B cell (primary cell): ENCODE measurements at regions of chr21 and their contacts with region 1.

Region 1: GRCh38 chr21:43810505-43811261 is 21.3 kb downstream of the RRP1 start:
- DNase-seq: peak; percentile 84
- ATAC-seq: peak; percentile 97
- H3K4me3 ChIP-seq: no peak overlapping the region
- H3K4me3 Mint-ChIP-seq: no peak overlapping the region
- H3K27ac ChIP-seq: no peak overlapping the region
- H3K27ac Mint-ChIP-seq: peak overlapping the region; percentile 56
- H3K4me1 ChIP-seq: peaks cover 21 to 33% of the 10 kb centered on the region in 2 donors
- H3K4me1 Mint-ChIP-seq: peaks cover 28% of the 10 kb centered on the region
- H3K27me3 ChIP-seq: peaks cover 0 to 25% (median 5%) of the 10 kb centered on the region in 4 experiments
- H3K27me3 Mint-ChIP-seq: peaks cover 7% of the 10 kb centered on the region
- CTCF ChIP-seq: peak; percentile 83

Region 2: DNA sequence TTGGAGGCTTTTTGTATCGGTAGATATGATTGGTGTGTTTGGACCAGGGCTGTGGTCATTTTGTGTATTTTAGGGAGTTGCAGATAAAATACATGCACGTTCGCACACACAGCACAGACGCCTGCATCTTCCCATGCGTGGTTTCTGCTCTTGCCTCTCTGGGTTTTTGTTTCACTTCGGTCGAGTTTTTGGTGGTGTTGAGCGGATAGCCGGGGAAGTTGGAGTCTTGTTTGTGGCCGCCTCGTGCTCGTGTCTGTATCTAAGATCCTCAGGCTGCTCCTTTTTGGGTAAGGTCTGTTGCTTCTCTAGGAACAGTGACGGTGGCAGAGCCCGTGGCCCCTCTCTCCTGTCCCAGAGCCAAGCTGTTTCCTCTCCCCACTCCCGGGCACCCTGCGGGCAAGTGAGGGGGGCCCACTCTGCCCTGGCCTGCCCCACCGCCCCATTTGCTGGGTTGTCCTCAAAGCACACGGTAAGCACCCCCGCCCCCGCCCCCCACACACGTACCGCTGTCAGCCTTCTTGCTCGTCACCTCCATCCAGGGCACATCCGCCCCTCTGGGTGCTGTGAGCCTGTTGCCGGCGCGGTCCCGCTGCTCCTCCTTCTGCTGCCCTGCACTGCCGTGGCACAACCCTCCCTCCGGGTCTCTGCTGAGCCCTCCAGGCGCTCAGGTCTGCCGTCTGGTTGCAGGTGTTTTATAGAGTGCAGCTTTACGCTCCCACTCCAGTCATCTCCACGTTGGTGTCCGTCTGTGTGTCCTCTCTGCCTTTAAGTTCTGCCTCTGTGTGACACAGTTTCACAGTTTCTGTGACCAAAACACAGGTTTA is 106.2 kb after region 1 on chr21:
- CTCF ChIA-PET with region 1: interaction called, 11 read pairs
- POLR2A ChIA-PET with region 1: no interaction called
- intact Hi-C with region 1: no loop called
- DNase-seq: peak; percentile 68
- ATAC-seq: peak; percentile 71
- H3K4me3 ChIP-seq: peak overlapping the region; percentile 24 to 65 (median 60)
- H3K4me3 Mint-ChIP-seq: peak overlapping the region; percentile 79
- H3K27ac ChIP-seq: peak overlapping the region; percentile 59 to 67
- H3K27ac Mint-ChIP-seq: peak overlapping the region; percentile 80
- H3K4me1 ChIP-seq: peaks cover 15 to 35% of the 10 kb centered on the region in 2 donors
- H3K4me1 Mint-ChIP-seq: peaks cover 55% of the 10 kb centered on the region
- H3K27me3 ChIP-seq: no peaks in the 10 kb centered on the region
- H3K27me3 Mint-ChIP-seq: no peaks in the 10 kb centered on the region
- CTCF ChIP-seq: no peak

Region 3: GRCh38 chr21:43975495-43975993 is 164.9 kb after region 1 on chr21:
- CTCF ChIA-PET with region 1: interaction called, 46 read pairs
- POLR2A ChIA-PET with region 1: no interaction called
- intact Hi-C with region 1: loop called (anchors 1 kb)
- DNase-seq: peak; percentile 83
- ATAC-seq: peak; percentile 97
- H3K4me3 ChIP-seq: no peak overlapping the region
- H3K4me3 Mint-ChIP-seq: no peak overlapping the region
- H3K27ac ChIP-seq: no peak overlapping the region
- H3K27ac Mint-ChIP-seq: no peak overlapping the region
- H3K4me1 ChIP-seq: peaks cover 0 to 6% of the 10 kb centered on the region in 2 donors
- H3K4me1 Mint-ChIP-seq: peaks cover 8% of the 10 kb centered on the region
- H3K27me3 ChIP-seq: no peaks in the 10 kb centered on the region
- H3K27me3 Mint-ChIP-seq: no peaks in the 10 kb centered on the region
- CTCF ChIP-seq: peak; percentile 93

Region 4: GRCh38 chr21:44487831-44488230 is 677.1 kb after region 1 on chr21:
- CTCF ChIA-PET with region 1: no interaction called
- POLR2A ChIA-PET with region 1: no interaction called
- intact Hi-C with region 1: loop called (anchors 10 kb)
- DNase-seq: no peak
- ATAC-seq: no peak
- H3K4me3 ChIP-seq: no peak overlapping the region
- H3K4me3 Mint-ChIP-seq: no peak overlapping the region
- H3K27ac ChIP-seq: no peak overlapping the region
- H3K27ac Mint-ChIP-seq: no peak overlapping the region
- H3K4me1 ChIP-seq: no peaks in the 10 kb centered on the region
- H3K4me1 Mint-ChIP-seq: no peaks in the 10 kb centered on the region
- H3K27me3 ChIP-seq: peaks cover 0 to 11% (median 0%) of the 10 kb centered on the region in 4 experiments
- H3K27me3 Mint-ChIP-seq: peaks cover 30% of the 10 kb centered on the region
- CTCF ChIP-seq: peak; percentile 29